ENCODE measurements at regions of chr19 and their contacts with region 1.

Region 1: DNA sequence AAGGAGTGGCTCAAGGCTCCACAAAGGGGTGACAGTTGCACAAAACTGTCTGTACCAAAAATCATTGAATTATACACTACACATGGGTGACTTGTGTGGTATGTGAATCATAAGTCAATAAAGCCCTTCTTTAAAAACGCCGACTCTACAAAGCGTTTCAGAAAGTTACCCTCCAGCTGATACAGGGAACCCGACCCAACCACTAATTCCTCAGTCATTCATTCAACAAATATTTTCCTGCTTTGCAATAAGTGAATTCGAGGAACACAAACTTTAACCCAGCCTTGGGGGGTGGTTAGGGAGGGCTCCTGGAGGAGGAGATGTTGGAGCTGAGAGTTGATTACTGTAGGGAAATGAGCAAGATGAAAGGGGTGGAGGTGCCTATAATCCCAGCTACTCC is 32.0 kb downstream of the LTBP4 start:
- DNase-seq: no peak
- H3K4me3 Mint-ChIP-seq: no peak overlapping the region
- H3K27ac Mint-ChIP-seq: no peak overlapping the region
- H3K4me1 Mint-ChIP-seq: peaks cover 10% of the 10 kb centered on the region
- H3K27me3 Mint-ChIP-seq: peaks cover 3% of the 10 kb centered on the region

Region 2: GRCh38 chr19:40231544-40232424 is 401.4 kb before region 1 on chr19:
- CTCF ChIA-PET with region 1: no interaction called
- intact Hi-C with region 1: no loop called
- DNase-seq: no peak
- H3K4me3 Mint-ChIP-seq: no peak overlapping the region
- H3K27ac Mint-ChIP-seq: no peak overlapping the region
- H3K4me1 Mint-ChIP-seq: peaks cover 21% of the 10 kb centered on the region
- H3K27me3 Mint-ChIP-seq: peaks cover 12% of the 10 kb centered on the region

Region 3: DNA sequence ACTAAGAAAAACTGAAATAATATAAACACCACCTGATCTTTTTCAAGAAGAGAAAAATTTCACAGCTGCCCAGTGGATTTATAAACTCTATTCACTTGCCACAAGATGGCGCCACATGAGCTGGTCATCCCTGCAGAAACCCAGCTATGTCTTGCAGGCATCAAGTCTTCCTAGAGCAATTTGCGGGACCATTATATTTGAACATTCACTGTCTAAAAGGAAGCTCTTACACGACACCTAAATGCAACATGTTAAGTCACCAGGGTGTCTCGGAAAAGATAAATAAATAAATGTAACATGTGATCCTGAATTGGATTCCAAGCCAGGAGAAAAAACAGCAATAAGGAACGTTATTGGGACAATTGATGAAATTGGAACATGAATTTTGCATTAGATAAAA is 327.8 kb before region 1 on chr19:
- CTCF ChIA-PET with region 1: interaction called, 5 read pairs
- intact Hi-C with region 1: loop called (anchors 1 kb)
- DNase-seq: peak; percentile 90
- H3K4me3 Mint-ChIP-seq: no peak overlapping the region
- H3K27ac Mint-ChIP-seq: no peak overlapping the region
- H3K4me1 Mint-ChIP-seq: peaks cover 2% of the 10 kb centered on the region
- H3K27me3 Mint-ChIP-seq: no peaks in the 10 kb centered on the region

Region 4: DNA sequence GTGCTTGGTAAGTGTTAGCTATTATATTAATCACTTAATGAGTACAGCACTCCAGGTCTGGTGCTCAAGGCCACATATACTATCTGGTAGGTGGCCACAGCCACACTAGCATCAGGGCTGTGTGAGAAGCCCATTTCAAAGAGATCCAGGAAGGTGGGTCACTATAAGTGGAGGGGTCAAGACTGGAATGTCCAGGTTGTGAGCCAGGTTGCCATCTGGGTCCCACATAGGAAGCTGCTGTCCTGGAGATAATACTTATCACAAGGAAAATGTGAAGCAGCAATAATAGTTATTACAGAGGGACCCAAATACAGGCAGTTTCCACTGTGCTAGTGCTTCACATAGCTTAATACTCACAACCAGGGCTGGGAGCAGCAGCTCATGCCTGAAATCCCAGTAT is 298.1 kb before region 1 on chr19:
- CTCF ChIA-PET with region 1: no interaction called
- intact Hi-C with region 1: no loop called
- DNase-seq: no peak
- H3K4me3 Mint-ChIP-seq: no peak overlapping the region
- H3K27ac Mint-ChIP-seq: no peak overlapping the region
- H3K4me1 Mint-ChIP-seq: no peaks in the 10 kb centered on the region
- H3K27me3 Mint-ChIP-seq: no peaks in the 10 kb centered on the region

Region 5: DNA sequence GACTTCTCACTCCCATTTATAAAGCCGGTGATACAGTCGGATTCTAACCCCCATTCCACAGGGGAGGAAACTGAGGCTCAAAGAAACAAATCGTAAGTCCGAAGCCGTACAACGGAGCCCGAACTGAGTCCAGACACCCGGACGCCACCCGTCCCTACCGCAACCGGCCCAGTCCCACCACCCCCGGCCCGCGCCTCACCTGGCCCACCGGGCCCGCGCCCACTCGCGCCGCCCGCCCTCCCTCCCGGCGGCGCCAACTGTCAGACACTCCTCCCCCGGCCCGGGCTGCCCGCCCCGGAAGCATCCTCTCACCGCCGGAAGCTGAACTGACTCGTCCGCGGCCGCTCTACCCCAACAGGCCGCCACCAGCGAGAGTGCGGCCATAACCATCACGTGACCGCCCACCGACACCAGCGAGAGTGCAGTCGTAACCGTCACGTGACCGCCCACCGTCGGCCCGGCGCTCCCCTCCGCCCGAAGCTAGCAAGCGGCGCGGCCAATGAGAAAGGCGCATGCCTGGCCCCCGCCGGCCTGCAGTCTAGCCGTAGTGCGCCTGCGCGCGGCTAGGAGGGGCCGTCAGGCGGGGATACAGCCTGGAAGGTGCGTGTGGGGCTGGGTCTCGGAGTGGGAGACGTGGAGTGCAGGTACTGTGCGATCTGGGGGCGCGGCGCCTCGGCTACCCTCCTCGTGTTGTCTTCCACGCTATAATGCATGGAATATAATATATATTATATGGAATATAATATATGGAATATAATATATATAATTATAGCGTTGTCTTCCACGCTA is 284.9 kb before region 1 on chr19 and contains the starts of genes C19orf47 and PLD3:
- CTCF ChIA-PET with region 1: no interaction called
- intact Hi-C with region 1: no loop called
- DNase-seq: peak; percentile 99
- H3K4me3 Mint-ChIP-seq: peak within 1 kb of the TSS; percentile 89
- H3K27ac Mint-ChIP-seq: peak within 1 kb of the TSS; percentile 78
- H3K4me1 Mint-ChIP-seq: peaks cover 29% of the 10 kb centered on the region
- H3K27me3 Mint-ChIP-seq: no peaks in the 10 kb centered on the region
- total RNA-seq, gene C19orf47: 13.5 to 14.6 TPM
- total RNA-seq, gene PLD3: 57.6 to 58.2 TPM

Region 6: GRCh38 chr19:40433391-40434216 is 199.6 kb before region 1 on chr19:
- CTCF ChIA-PET with region 1: no interaction called
- intact Hi-C with region 1: no loop called
- DNase-seq: peak; percentile 64
- H3K4me3 Mint-ChIP-seq: peak overlapping the region; percentile 88
- H3K27ac Mint-ChIP-seq: peak overlapping the region; percentile 91
- H3K4me1 Mint-ChIP-seq: peaks cover 10% of the 10 kb centered on the region
- H3K27me3 Mint-ChIP-seq: no peaks in the 10 kb centered on the region

Region 7: DNA sequence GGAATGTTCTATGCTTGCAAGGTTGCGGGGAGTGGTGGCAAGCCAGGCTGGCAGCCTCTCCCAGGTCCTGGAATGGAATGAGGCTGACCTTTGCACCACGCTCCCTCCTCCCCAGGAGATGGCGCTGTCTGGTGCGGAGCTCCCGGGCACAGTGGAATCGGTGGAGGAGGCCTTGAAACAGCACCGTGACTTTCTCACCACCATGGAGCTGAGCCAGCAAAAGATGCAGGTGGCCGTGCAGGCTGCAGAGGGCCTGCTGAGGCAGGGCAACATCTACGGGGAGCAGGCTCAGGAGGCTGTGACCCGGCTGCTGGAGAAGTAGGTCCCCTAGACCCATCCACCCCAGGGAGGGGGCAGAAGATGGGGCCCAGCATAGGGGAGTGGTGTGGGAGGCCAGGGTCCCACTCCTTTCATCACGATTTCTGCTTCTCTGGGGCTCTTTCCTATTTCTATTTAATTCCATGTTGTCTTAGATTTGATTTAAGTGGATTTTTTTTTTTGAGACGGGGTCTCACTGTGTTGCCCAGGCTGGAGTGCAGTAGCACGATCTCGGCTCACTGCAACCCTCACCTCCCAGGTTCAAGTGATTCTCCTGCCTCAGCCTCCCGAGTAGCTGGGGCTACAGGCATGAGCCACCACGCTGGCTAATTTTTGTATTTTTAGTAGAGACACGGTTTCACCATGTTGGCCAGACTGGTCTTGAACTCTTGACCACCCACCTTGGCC is 109.7 kb before region 1 on chr19:
- CTCF ChIA-PET with region 1: interaction called, 26 read pairs
- intact Hi-C with region 1: loop called (anchors 1 kb)
- DNase-seq: peak; percentile 69
- H3K4me3 Mint-ChIP-seq: no peak overlapping the region
- H3K27ac Mint-ChIP-seq: no peak overlapping the region
- H3K4me1 Mint-ChIP-seq: peaks cover 4% of the 10 kb centered on the region
- H3K27me3 Mint-ChIP-seq: peaks cover 12% of the 10 kb centered on the region

Region 8: DNA sequence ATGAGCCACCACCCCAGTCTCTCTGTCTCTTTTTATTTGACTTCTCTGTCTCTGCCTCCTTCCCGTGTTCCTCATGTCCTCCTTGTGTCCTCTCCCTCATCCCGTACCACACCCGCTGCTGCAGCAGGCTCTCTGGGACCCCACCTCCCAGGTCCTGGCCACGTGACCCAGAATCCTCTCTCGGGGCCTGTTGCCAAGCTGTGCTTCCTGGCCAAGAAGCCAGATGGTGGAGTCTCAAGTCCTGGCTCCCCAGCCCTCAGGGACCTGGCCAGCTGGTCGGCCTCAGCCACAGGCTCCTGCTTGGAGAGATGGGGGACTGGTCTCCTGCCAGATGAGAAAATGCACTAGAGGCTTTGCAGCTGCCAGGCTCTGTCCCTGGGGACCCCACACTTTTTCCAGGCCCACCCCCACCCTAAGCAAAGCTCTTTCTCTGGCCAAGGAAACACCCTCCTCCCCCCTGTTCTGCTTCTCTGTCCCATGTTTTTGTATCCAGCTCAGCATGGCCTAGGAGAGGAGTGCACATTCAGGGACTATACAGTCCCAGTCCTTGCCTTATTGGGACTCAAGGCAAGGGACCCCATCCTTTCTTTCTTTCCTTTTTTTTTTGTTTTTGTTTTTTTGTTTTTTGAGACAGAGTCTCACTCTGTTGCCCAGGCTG is 90.9 kb before region 1 on chr19:
- CTCF ChIA-PET with region 1: interaction called, 21 read pairs
- intact Hi-C with region 1: loop called (anchors 1 kb)
- DNase-seq: no peak
- H3K4me3 Mint-ChIP-seq: no peak overlapping the region
- H3K27ac Mint-ChIP-seq: no peak overlapping the region
- H3K4me1 Mint-ChIP-seq: no peaks in the 10 kb centered on the region
- H3K27me3 Mint-ChIP-seq: peaks cover 6% of the 10 kb centered on the region

Region 9: GRCh38 chr19:40598121-40598917 is 34.9 kb before region 1 on chr19:
- CTCF ChIA-PET with region 1: interaction called, 68 read pairs
- intact Hi-C with region 1: no loop called
- DNase-seq: peak; percentile 91
- H3K4me3 Mint-ChIP-seq: peak overlapping the region; percentile 12
- H3K27ac Mint-ChIP-seq: no peak overlapping the region
- H3K4me1 Mint-ChIP-seq: peaks cover 50% of the 10 kb centered on the region
- H3K27me3 Mint-ChIP-seq: peaks cover 41% of the 10 kb centered on the region

Region 10: GRCh38 chr19:40609561-40610395 is 23.4 kb before region 1 on chr19:
- CTCF ChIA-PET with region 1: interaction called, 68 read pairs
- intact Hi-C with region 1: loop called (anchors 1 kb)
- DNase-seq: peak; percentile 97
- H3K4me3 Mint-ChIP-seq: peak overlapping the region; percentile 89
- H3K27ac Mint-ChIP-seq: peak overlapping the region; percentile 91
- H3K4me1 Mint-ChIP-seq: peaks cover 67% of the 10 kb centered on the region
- H3K27me3 Mint-ChIP-seq: no peaks in the 10 kb centered on the region

Region 11: GRCh38 chr19:40646564-40647254 is 13.5 kb after region 1 on chr19:
- CTCF ChIA-PET with region 1: interaction called, 53 read pairs
- intact Hi-C with region 1: no loop called
- DNase-seq: no peak
- H3K4me3 Mint-ChIP-seq: no peak overlapping the region
- H3K27ac Mint-ChIP-seq: no peak overlapping the region
- H3K4me1 Mint-ChIP-seq: peaks cover 8% of the 10 kb centered on the region
- H3K27me3 Mint-ChIP-seq: peaks cover 4% of the 10 kb centered on the region

Measured in activated naive CD4-positive, alpha-beta T cell treated with anti-CD3 and anti-CD28 coated beads for 36 hours (primary cell).